Activated T-helper 1 cell treated with anti-CD3 and anti-CD28 coated beads, Interleukin-12 subunit alpha, Interleukin-12 subunit beta, Interleukin-2, Interleukin-4 antibody, amounts not matched to agents 30 ng/mL and 10 ng/mL and 1 ng/mL, durations not matched to agents 14 hours and 24 hours and 36 hours (primary cell): ENCODE measurements at regions of chrX and their contacts with region 1.

Region 1: GRCh38 chrX:154411322-154411980 is at the start of gene TAFAZZIN:
- DNase-seq: peak; percentile 74
- H3K4me3 Mint-ChIP-seq: peak within 1 kb of the TSS; percentile 93
- H3K27ac Mint-ChIP-seq: peak within 1 kb of the TSS; percentile 94
- H3K4me1 Mint-ChIP-seq: peaks cover 12% of the 10 kb centered on the region
- H3K27me3 Mint-ChIP-seq: no peaks in the 10 kb centered on the region
- total RNA-seq, gene TAFAZZIN: 65.2 and 69.2 TPM in 2 replicates

Region 2: DNA sequence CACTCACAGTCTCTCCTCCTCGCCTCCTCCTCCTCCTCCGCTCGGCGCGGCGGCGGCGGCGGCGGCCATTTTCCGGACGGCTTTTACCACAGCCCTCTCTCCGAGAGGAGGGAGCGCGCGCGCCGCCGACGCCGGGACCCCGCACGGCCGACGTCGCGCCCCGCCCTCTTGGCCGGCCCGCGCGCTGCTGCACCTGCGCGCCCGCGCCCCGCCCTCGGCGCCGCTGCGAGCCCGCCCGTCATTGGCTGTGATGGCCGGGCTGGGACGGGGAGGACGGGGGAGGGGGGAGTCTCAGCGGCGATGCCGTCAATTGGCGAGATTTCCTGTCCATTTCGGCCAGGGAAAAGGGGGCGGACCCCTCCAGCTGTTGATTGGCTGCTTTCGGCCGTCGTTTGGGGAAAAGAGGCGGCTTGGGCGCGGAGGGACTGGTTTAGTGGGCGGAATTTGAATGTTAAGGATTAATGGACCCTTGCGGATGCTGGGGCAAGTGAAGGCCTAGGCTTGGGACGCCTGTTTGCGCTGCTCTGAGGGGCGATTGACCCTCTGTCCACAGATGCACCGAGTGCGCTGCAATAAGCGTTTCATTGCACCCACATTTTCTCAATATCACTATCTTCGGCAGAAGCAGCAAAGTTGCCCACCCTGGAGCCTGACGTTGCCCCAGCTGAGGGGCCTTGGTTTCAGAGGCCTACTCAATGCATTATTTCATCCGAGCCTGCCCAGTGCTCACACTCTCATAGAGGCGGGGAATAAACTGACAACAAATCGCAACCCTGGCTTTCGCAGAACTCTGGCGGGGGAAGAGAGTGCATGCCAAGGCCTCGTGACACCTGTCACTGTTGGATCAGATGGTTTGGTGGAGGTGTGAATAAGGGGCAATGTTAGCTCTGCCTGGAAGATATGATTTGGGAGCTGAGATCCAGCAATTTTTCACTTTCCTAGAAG is 313.6 kb before region 1 on chrX and contains the start of gene MECP2:
- intact Hi-C with region 1: loop called (anchors 5 kb)
- DNase-seq: peak; percentile 84
- H3K4me3 Mint-ChIP-seq: peak within 1 kb of the TSS; percentile 97
- H3K27ac Mint-ChIP-seq: peak within 1 kb of the TSS; percentile 99
- H3K4me1 Mint-ChIP-seq: peaks cover 54% of the 10 kb centered on the region
- H3K27me3 Mint-ChIP-seq: no peaks in the 10 kb centered on the region
- total RNA-seq, gene MECP2: 53.4 and 59.4 TPM in 2 replicates

Region 3: DNA sequence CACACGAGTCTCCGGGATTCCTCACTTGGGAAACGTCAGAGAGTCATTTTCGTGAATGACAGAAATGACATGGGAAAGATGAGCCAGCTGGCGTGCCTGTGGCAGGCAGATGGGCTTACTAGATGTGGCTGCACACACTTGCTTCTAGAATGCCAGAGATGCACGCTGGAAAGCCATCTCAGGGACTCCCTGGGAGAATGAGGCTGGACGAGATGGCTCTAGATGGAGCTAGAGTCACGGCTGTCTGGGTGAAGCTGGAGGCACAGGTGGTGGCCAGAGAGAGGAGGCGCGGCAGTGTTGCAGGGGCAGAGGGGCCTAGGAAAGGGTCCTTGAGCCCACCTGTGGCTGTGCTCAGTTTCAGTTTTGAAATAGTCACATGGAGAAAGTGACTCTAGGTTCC is 89.9 kb before region 1 on chrX:
- intact Hi-C with region 1: no loop called
- DNase-seq: no peak
- H3K4me3 Mint-ChIP-seq: no peak overlapping the region
- H3K27ac Mint-ChIP-seq: no peak overlapping the region
- H3K4me1 Mint-ChIP-seq: peaks cover 28% of the 10 kb centered on the region
- H3K27me3 Mint-ChIP-seq: no peaks in the 10 kb centered on the region

Region 4: GRCh38 chrX:154370882-154371770 is 40.3 kb before region 1 on chrX:
- intact Hi-C with region 1: loop called (anchors 2 kb)
- DNase-seq: peak; percentile 88
- H3K4me3 Mint-ChIP-seq: peak overlapping the region; percentile 84
- H3K27ac Mint-ChIP-seq: peak overlapping the region; percentile 63
- H3K4me1 Mint-ChIP-seq: peaks cover 11% of the 10 kb centered on the region
- H3K27me3 Mint-ChIP-seq: no peaks in the 10 kb centered on the region

Region 5: DNA sequence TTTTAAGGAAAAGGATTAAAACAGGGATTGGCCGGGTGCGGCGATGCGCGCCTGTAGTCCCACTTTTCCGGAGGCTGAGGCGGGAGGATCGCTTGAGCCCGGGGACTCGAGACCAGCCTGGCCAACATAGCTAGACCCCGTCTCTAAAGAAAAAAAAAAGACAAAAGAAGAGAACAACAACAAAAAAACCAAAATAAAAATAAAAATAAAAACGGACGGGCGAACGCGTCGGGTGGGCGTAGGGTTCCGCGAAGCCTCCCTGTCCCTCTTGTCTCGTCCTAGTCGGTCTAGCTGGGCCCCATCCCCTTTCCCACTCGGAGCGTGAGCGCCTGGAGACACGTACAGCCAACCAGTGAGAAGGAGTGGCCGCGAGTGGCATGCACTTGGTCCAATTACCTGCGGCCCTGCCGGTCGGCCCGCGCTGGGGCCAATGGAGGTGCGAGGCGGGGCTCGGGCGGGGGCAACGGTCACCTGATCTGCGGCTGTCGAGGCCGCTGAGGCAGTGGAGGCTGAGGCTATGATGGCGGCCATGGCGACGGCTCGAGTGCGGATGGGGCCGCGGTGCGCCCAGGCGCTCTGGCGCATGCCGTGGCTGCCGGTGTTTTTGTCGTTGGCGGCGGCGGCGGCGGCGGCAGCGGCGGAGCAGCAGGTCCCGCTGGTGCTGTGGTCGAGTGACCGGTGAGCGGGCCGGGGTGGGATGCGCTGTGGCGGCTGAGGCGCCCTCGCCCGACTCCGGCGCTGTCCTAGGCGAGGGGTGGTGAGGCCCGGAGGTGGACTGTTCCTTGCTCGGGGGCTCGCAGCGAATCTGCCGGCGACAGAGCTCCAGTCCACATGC is 16.9 kb after region 1 on chrX and contains the start of gene ATP6AP1:
- intact Hi-C with region 1: loop called (anchors 1 kb)
- DNase-seq: peak; percentile 88
- H3K4me3 Mint-ChIP-seq: peak within 1 kb of the TSS; percentile 83
- H3K27ac Mint-ChIP-seq: peak within 1 kb of the TSS; percentile 80
- H3K4me1 Mint-ChIP-seq: peaks cover 22% of the 10 kb centered on the region
- H3K27me3 Mint-ChIP-seq: no peaks in the 10 kb centered on the region
- total RNA-seq, gene ATP6AP1: 49.8 and 54.3 TPM in 2 replicates

Region 6: DNA sequence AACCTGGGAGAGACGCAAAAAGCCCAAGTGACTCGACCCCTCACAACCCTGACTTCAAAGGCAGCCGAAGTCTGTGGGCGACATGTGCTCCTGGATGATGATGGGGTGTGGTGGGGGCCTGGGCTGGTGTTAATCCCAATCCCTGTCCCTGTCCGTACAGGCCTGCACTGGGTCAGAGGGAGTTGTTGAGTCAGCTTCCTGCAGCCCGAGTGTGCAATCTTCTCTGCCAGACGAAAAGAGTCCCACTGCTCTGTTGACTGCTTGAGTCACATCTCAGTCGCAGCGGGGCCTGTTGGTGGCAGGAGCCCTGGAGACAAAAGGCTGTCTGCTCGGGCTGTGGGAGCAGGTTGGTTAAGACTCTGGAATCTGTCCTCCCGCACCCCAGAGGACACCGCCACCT is 94.3 kb after region 1 on chrX:
- intact Hi-C with region 1: no loop called
- DNase-seq: no peak
- H3K4me3 Mint-ChIP-seq: no peak overlapping the region
- H3K27ac Mint-ChIP-seq: no peak overlapping the region
- H3K4me1 Mint-ChIP-seq: peaks cover 2% of the 10 kb centered on the region
- H3K27me3 Mint-ChIP-seq: peaks cover 2% of the 10 kb centered on the region